SK-N-SH (cell line): ENCODE measurements at regions of chr17 and their contacts with region 1.

Region 1: DNA sequence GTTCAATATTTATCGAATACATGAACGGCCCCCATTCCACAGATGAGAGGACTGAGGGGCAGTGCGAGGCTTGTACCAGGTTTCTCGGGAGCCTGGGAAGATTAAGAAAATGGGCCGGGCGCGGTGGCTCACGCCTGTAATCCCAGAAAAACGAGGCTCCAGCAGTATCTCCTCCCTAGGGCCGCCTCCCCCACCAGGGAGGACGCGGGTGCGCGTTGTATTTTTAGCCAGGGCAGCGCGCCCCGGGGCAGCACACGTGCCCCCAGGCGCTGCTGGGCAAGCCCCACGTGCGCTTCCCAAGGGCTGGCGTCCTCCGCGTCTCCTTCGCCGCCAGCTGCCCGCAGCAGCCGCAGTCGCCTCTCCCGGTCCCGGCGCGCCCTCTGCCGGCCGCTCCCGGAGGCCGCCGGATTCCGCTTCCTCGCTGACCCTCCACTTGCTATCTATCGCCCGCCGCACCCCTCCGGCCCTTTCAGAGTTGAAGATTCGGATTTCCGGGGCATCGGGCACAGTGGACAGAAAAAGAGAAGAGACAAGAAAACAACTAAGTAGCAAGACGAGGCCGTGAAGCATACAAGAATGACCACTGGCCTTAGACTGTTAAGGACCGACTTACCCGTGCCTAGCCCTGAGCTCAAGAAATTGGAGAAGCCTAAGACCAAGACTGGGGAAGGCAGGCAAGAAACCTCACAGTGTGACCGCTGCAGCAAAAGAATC is 1.9 kb upstream of the YBX2 start:
- DNase-seq: peak; percentile 92
- H3K4me3 ChIP-seq: peak overlapping the region in 1 of 2 experiments; percentile 37; a peak in 1 of 4 replicates
- H3K27ac ChIP-seq: no peak overlapping the region
- H3K4me1 ChIP-seq: peaks cover 3 to 8% of the 10 kb centered on the region in 2 experiments; a peak in 1 of 4 replicates
- H3K27me3 ChIP-seq: peaks cover 24% of the 10 kb centered on the region; the same call in 1 of the 2 replicates
- CTCF ChIP-seq: peak; percentile 88
- EP300 ChIP-seq: no peak
- RAD21 ChIP-seq: peak; percentile 92

Region 2: DNA sequence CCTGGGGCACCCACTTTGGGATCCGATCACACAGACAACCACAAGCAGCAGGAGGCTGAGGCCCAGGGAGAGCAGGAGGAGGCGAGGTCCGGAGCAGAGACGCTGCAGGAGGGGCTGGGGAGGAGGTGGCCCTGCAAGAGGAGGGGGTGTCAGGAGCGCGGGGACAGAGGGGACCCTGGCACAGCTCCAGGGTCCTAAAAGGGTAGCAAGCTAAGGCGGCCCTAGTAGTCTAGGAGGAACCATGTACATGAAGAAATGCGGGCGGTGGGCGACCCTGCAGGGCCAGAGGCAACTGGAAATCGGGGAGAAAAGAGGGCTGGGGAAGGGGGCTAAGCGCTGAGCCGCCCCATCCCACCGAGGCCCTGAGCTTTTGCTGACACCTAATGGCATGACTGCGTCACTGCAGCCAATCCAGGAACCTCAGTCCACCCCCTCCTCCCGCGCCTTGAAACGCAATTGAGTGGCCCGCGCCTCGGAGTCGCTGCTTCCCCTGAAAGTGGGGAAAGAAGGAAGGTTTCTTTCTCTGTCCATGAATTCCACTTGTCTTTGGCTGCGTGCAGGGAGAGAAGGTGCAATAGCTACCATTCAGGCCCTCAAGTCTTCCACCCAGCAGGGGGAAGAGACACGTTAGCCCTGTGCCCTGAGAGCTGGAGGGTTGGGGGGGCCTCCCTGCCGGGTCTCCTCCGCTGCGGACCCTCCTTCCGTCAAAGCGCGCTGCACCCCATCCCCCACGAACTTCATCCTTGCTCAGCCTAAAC is 119.0 kb before region 1 on chr17:
- CTCF ChIA-PET with region 1: interaction called, 12 read pairs
- POLR2A ChIA-PET with region 1: no interaction called
- DNase-seq: peak; percentile 95
- H3K4me3 ChIP-seq: peak overlapping the region; percentile 38 to 56
- H3K27ac ChIP-seq: no peak overlapping the region
- H3K4me1 ChIP-seq: peaks cover 0 to 8% of the 10 kb centered on the region in 2 experiments; a peak in 1 of 4 replicates
- H3K27me3 ChIP-seq: no peaks in the 10 kb centered on the region
- CTCF ChIP-seq: peak; percentile 85
- EP300 ChIP-seq: no peak
- RAD21 ChIP-seq: peak; percentile 81

Region 3: DNA sequence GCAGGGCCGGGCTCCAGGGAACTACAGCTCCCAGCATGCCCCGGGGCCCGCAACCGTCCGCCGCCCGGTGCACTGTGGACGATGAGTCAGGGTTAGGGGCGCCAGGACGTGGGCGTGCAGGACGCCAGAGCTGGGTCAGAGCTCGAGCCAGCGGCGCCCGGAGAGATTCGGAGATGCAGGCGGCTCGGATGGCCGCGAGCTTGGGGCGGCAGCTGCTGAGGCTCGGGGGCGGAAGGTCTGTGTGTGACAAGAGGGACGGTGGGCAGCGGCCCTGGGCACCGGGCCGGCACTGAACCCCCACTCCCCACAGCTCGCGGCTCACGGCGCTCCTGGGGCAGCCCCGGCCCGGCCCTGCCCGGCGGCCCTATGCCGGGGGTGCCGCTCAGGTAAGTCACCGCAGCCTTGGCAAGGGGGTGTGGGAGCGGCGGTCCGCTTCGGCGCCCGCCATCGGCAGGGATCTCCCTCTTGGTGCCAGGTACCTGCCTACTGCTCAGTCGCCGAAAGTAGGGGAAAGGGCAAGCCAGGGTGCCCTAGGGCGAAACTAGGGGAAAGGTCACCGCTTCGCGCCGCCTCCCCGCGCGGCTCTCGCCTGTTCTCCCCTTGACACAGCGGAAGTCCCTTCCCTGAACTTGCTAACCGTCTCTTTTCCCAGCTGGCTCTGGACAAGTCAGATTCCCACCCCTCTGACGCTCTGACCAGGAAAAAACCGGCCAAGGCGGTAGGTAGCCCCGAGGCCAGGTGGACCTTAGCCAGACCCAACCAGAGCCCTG is 76.3 kb before region 1 on chr17 and contains the starts of genes ACADVL and DLG4:
- CTCF ChIA-PET with region 1: interaction called, 29 read pairs
- POLR2A ChIA-PET with region 1: interaction called, 3 read pairs
- DNase-seq: peak; percentile 90
- H3K4me3 ChIP-seq: peak within 1 kb of the TSS; percentile 79 to 99
- H3K27ac ChIP-seq: peak within 1 kb of the TSS; percentile 76 to 89
- H3K4me1 ChIP-seq: peaks cover 20 to 54% of the 10 kb centered on the region in 2 experiments; a peak in 3 of 4 replicates
- H3K27me3 ChIP-seq: no peaks in the 10 kb centered on the region
- CTCF ChIP-seq: no peak
- EP300 ChIP-seq: no peak
- RAD21 ChIP-seq: no peak
- polyA plus RNA-seq, gene ACADVL: 635 and 796 TPM in 2 replicates
- polyA plus RNA-seq, gene DLG4: 22.1 and 30.5 TPM in 2 replicates

Region 4: GRCh38 chr17:7252176-7253043 is 43.9 kb before region 1 on chr17 and contains the start of gene ELP5:
- CTCF ChIA-PET with region 1: interaction called, 14 read pairs
- POLR2A ChIA-PET with region 1: no interaction called
- DNase-seq: peak; percentile 91
- H3K4me3 ChIP-seq: peak within 1 kb of the TSS; percentile 81 to 95
- H3K27ac ChIP-seq: peak within 1 kb of the TSS; percentile 97 to 99
- H3K4me1 ChIP-seq: peaks cover 9 to 23% of the 10 kb centered on the region in 2 experiments; a peak in 3 of 4 replicates
- H3K27me3 ChIP-seq: no peaks in the 10 kb centered on the region
- CTCF ChIP-seq: peak; percentile 46
- EP300 ChIP-seq: peak in 1 of 2 experiments; percentile 2; a peak in 1 of 4 replicates
- RAD21 ChIP-seq: peak; percentile 38
- polyA plus RNA-seq, gene ELP5: 45.4 and 52.1 TPM in 2 replicates

Region 5: GRCh38 chr17:7266784-7267183 is 29.6 kb before region 1 on chr17:
- CTCF ChIA-PET with region 1: interaction called, 16 read pairs
- POLR2A ChIA-PET with region 1: no interaction called
- DNase-seq: no peak
- H3K4me3 ChIP-seq: no peak overlapping the region
- H3K27ac ChIP-seq: peak overlapping the region in 1 of 2 experiments; percentile 46; a peak in 1 of 4 replicates
- H3K4me1 ChIP-seq: peaks cover 0 to 6% of the 10 kb centered on the region in 2 experiments; a peak in 2 of 4 replicates
- H3K27me3 ChIP-seq: no peaks in the 10 kb centered on the region
- CTCF ChIP-seq: no peak
- EP300 ChIP-seq: no peak
- RAD21 ChIP-seq: no peak

Region 6: DNA sequence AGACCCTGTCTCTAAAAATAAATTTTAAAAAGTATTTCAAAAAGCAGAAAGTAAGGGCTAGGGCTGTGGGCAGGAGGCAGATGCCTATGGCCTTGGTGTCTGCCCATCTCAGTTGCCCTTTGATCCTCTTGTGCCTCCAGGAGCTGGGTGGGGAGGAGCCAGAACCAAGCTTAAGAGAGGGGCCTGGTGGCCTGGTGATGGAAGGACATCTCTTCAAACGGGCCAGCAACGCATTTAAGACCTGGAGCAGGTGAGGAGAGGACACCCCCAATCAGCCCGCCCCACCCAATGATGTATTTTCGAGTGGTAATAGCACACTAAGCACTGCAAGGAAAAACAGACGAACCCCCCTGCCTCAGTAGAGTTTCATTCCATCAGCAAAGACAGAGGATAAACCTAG is 48.1 kb after region 1 on chr17:
- CTCF ChIA-PET with region 1: interaction called, 18 read pairs
- POLR2A ChIA-PET with region 1: no interaction called
- DNase-seq: no peak
- H3K4me3 ChIP-seq: no peak overlapping the region
- H3K27ac ChIP-seq: no peak overlapping the region
- H3K4me1 ChIP-seq: peaks cover 0 to 5% of the 10 kb centered on the region in 2 experiments; a peak in 1 of 4 replicates
- H3K27me3 ChIP-seq: peaks cover 19% of the 10 kb centered on the region
- CTCF ChIP-seq: no peak
- EP300 ChIP-seq: no peak
- RAD21 ChIP-seq: no peak